ENCODE measurements at regions of chr4 and their contacts with region 1.

Region 1: GRCh38 chr4:69689599-69689998 is 36.6 kb upstream of the UGT2A1 start:
- DNase-seq: no peak
- ATAC-seq: no peak
- H3K4me3 Mint-ChIP-seq: no peak overlapping the region
- H3K27ac Mint-ChIP-seq: no peak overlapping the region
- H3K4me1 Mint-ChIP-seq: peaks cover 4% of the 10 kb centered on the region
- H3K27me3 Mint-ChIP-seq: no peaks in the 10 kb centered on the region

Region 2: GRCh38 chr4:69322055-69322454 is 367.5 kb before region 1 on chr4:
- CTCF ChIA-PET with region 1: no interaction called
- POLR2A ChIA-PET with region 1: no interaction called
- intact Hi-C with region 1: loop called in 1 of 2 experiments (anchors 5 kb)
- DNase-seq: no peak
- ATAC-seq: no peak
- H3K4me3 Mint-ChIP-seq: no peak overlapping the region
- H3K27ac Mint-ChIP-seq: no peak overlapping the region
- H3K4me1 Mint-ChIP-seq: no peaks in the 10 kb centered on the region
- H3K27me3 Mint-ChIP-seq: no peaks in the 10 kb centered on the region

Region 3: GRCh38 chr4:69749771-69750170 is 60.2 kb after region 1 on chr4:
- CTCF ChIA-PET with region 1: no interaction called
- POLR2A ChIA-PET with region 1: no interaction called
- intact Hi-C with region 1: no loop called
- DNase-seq: no peak
- ATAC-seq: no peak
- H3K4me3 Mint-ChIP-seq: no peak overlapping the region
- H3K27ac Mint-ChIP-seq: no peak overlapping the region
- H3K4me1 Mint-ChIP-seq: peaks cover 2% of the 10 kb centered on the region
- H3K27me3 Mint-ChIP-seq: no peaks in the 10 kb centered on the region

Region 4: GRCh38 chr4:69823481-69824186 is 134.0 kb after region 1 on chr4:
- CTCF ChIA-PET with region 1: interaction called, 11 read pairs
- POLR2A ChIA-PET with region 1: no interaction called
- intact Hi-C with region 1: loop called (anchors 1 kb)
- DNase-seq: peak; percentile 71
- ATAC-seq: peak; percentile 94
- H3K4me3 Mint-ChIP-seq: no peak overlapping the region
- H3K27ac Mint-ChIP-seq: no peak overlapping the region
- H3K4me1 Mint-ChIP-seq: peaks cover 5% of the 10 kb centered on the region
- H3K27me3 Mint-ChIP-seq: no peaks in the 10 kb centered on the region

Region 5: GRCh38 chr4:69849969-69850368 is 160.4 kb after region 1 on chr4:
- CTCF ChIA-PET with region 1: no interaction called
- POLR2A ChIA-PET with region 1: no interaction called
- intact Hi-C with region 1: no loop called
- DNase-seq: no peak
- ATAC-seq: peak; percentile 60
- H3K4me3 Mint-ChIP-seq: no peak overlapping the region
- H3K27ac Mint-ChIP-seq: no peak overlapping the region
- H3K4me1 Mint-ChIP-seq: no peaks in the 10 kb centered on the region
- H3K27me3 Mint-ChIP-seq: peaks cover 2% of the 10 kb centered on the region

Region 6: DNA sequence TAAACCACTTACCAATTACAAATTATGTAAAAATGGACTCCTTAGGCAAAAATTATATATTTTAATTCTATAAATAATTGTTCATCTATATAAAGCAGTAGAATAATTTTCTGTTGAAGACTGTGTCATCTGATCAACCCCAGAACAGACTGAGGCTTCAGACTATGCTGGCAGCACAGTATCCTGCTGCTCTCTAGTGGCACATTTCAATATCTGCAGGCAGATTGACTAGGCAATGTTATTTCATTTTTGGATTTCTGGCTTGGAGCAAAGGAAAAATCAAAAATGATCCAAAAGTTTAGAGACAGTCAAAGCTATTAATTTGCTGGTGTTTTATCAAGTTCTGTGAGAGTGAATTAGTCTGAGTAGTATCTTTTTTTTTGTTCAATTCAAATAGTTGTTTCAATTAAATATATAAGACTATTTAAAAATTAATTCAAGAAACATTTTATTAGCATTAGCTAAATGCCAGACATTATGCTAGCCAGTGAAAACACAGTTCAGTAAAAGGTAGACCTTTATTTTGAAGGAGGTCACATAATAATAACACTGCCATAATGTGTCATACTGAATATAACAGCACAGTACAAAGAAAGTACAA is 191.7 kb after region 1 on chr4:
- CTCF ChIA-PET with region 1: interaction called, 23 read pairs
- POLR2A ChIA-PET with region 1: no interaction called
- intact Hi-C with region 1: loop called (anchors 1 kb)
- DNase-seq: peak; percentile 41
- ATAC-seq: peak; percentile 69
- H3K4me3 Mint-ChIP-seq: no peak overlapping the region
- H3K27ac Mint-ChIP-seq: no peak overlapping the region
- H3K4me1 Mint-ChIP-seq: no peaks in the 10 kb centered on the region
- H3K27me3 Mint-ChIP-seq: peaks cover 4% of the 10 kb centered on the region

Region 7: GRCh38 chr4:70183168-70183939 is 493.8 kb after region 1 on chr4:
- CTCF ChIA-PET with region 1: interaction called, 6 read pairs
- POLR2A ChIA-PET with region 1: no interaction called
- intact Hi-C with region 1: loop called (anchors 1 kb)
- DNase-seq: peak; percentile 40
- ATAC-seq: no peak
- H3K4me3 Mint-ChIP-seq: no peak overlapping the region
- H3K27ac Mint-ChIP-seq: no peak overlapping the region
- H3K4me1 Mint-ChIP-seq: no peaks in the 10 kb centered on the region
- H3K27me3 Mint-ChIP-seq: no peaks in the 10 kb centered on the region

Region 8: DNA sequence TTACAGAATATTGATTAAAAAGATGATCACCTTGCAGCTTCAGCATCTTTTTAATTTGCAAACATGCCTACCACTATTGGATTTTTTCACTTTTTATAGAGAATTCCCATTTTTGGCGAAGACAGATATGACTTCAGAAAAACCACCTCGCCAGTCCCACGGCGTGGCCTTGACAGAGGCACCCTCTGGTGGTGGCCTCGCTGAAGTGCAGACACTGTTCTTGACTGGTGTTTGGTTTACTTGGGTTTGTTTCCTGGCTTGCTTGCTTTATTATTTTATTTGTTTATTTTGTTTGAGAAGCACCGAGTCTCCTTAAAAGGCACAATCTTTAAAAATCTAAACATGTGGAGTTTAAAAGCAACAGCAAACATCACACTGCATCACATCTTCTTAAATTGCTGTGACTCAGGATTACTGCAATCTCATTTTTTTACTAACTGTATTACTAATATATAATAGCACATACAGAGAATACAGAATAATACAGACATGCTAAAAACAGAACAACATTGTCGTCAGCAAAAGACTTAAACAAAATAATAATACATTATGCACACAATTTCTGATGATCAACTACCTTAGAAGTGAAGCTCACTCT is 815.7 kb after region 1 on chr4:
- CTCF ChIA-PET with region 1: no interaction called
- POLR2A ChIA-PET with region 1: no interaction called
- intact Hi-C with region 1: loop called (anchors 1 to 5 kb)
- DNase-seq: peak; percentile 69
- ATAC-seq: peak; percentile 64
- H3K4me3 Mint-ChIP-seq: no peak overlapping the region
- H3K27ac Mint-ChIP-seq: no peak overlapping the region
- H3K4me1 Mint-ChIP-seq: no peaks in the 10 kb centered on the region
- H3K27me3 Mint-ChIP-seq: no peaks in the 10 kb centered on the region

Region 9: DNA sequence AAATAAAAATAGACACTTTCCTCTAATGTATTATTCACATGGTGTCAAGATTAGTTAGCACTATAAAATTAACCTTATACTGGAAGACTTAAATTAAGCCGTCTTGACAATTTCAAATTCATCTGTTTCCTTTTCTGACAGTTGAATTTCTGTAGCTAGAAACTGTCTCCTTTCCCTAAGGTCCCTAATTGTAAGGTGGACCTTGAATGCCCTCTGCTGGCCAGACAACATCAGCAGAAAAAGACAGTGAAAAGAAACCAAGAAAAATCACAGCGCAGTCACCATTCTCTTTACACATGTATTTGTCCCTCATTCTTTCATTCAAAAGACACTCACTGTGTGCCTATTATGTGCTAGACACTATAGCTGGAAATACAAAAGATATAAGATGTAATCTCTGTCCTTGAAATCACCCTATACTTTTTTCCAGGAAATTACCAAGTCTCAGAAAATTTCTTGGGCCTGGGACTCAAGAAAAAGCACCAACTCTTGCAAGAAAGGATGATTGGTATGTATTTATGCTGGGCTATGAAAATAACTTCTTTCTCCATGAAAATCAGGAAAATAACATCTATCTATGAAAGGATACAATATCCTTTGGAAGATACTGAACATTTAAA is 869.7 kb after region 1 on chr4:
- CTCF ChIA-PET with region 1: interaction called, 4 read pairs
- POLR2A ChIA-PET with region 1: no interaction called
- intact Hi-C with region 1: loop called in 1 of 2 experiments (anchors 2 kb)
- DNase-seq: peak; percentile 64
- ATAC-seq: no peak
- H3K4me3 Mint-ChIP-seq: no peak overlapping the region
- H3K27ac Mint-ChIP-seq: no peak overlapping the region
- H3K4me1 Mint-ChIP-seq: no peaks in the 10 kb centered on the region
- H3K27me3 Mint-ChIP-seq: no peaks in the 10 kb centered on the region

Measured in activated CD4-positive, alpha-beta T cell treated with anti-CD3 and anti-CD28 coated beads for 36 hours (primary cell).